GM10248 (cell line): ENCODE measurements at regions of chr20 and their contacts with region 1.

Region 1: GRCh38 chr20:64279826-64280459 is 24.4 kb downstream of the PCMTD2 start:
- DNase-seq: no peak
- CTCF ChIP-seq: no peak

Region 2: GRCh38 chr20:64161356-64162238 is 118.3 kb before region 1 on chr20:
- CTCF ChIA-PET with region 1: no interaction called
- POLR2A ChIA-PET with region 1: no interaction called
- DNase-seq: peak; percentile 69
- CTCF ChIP-seq: no peak

Region 3: DNA sequence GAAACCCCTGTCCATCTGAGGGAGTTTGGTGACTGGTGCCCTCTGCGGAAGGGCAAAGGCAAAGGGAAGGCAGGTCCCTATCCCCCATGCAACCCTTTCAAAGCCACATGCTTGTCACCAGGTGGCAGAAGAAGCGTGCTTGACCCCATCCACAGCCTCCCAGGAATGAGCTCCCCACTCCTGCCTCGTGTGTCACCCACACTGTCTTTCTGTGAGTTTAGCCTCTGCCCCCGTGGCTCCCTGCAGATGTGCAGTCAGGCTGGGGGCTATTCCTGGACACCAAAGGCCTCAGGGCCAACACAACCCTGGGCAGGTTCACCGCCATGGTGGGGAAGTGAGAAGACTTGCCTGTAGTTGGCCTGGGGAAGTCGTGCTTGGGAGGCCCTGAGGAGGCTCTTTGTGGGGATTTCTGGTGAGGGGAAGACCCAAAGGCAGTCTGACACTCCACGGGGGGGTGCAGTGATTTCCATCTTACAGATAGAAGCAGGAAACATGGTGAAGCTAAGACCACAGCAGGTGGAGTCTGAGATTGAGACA is 41.0 kb before region 1 on chr20:
- CTCF ChIA-PET with region 1: interaction called, 11 read pairs
- POLR2A ChIA-PET with region 1: no interaction called
- DNase-seq: peak; percentile 87
- CTCF ChIP-seq: no peak

Region 4: DNA sequence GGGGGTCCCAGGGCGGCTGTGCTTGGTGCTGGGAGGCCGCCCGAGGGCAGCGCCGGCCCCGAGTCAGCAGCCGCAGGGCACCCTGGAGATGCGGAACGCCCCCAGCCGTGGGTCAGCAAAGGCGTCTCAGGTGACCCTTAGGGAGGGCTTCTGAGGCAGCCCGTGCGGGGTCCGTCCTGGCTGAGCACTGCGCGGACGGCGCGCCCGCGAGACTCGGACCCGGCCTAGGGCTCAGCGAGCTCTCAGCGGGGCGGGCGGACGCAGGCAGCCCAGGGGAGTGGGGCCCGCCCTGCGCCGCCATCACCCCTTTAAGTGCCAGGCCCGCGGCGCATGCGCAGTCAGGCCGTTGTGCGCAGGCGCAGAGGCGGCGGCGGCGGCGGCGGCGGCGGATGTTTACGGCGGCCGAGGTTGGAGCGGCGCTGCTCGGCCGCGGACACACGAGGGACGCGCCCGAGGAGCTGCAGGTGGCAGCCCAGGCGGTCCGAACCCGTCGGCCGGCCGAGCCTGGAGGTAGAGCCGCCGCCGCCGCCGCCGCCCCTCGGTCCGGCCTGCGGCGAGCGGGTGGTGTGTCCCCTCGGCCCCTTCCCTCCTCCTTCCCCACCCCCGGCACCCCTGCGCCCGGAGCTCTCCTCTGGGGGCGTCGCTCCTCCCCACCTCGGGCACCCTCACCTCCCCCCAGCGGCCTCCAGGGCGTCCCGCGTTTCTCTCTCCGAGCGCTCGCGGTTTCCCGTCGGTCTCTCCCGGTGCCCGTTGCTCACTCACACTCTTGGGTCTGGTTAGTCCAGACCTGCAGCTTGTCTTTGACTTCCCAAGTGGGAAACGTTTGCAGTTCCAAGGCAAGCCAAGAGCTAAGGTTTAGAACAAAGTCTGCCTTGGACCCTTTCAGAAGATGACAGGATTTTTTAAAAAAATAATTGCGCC is 24.3 kb before region 1 on chr20 and contains the start of gene PCMTD2:
- CTCF ChIA-PET with region 1: interaction called, 122 read pairs
- POLR2A ChIA-PET with region 1: no interaction called
- DNase-seq: peak; percentile 97
- CTCF ChIP-seq: no peak